Activated naive CD4-positive, alpha-beta T cell treated with anti-CD3 and anti-CD28 coated beads for 36 hours (primary cell): ENCODE measurements at regions of chr5 and their contacts with region 1.

Region 1: GRCh38 chr5:16666883-16667398 is 50.1 kb upstream of the RETREG1 start:
- DNase-seq: peak; percentile 53
- H3K4me3 Mint-ChIP-seq: no peak overlapping the region
- H3K27ac Mint-ChIP-seq: no peak overlapping the region
- H3K4me1 Mint-ChIP-seq: no peaks in the 10 kb centered on the region
- H3K27me3 Mint-ChIP-seq: no peaks in the 10 kb centered on the region

Region 2: DNA sequence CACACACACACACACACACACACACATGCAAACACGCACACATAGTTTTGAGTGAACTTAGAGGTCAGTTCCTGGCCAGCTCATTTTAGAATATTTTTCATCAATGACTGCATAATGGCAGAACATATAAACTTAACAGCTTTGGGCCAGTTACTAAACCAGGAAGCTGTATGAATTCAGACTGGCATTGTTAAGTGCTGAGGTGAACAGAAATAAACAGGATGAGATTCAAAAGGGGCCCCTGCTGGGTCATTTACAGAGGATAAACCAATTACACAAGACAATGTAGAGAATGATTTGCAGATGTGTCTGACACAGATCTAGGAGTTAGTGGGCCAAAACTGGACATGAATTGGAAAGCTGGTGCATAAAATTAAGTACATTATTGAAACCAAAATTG is 531.9 kb before region 1 on chr5:
- CTCF ChIA-PET with region 1: no interaction called
- intact Hi-C with region 1: no loop called
- DNase-seq: no peak
- H3K4me3 Mint-ChIP-seq: no peak overlapping the region
- H3K27ac Mint-ChIP-seq: no peak overlapping the region
- H3K4me1 Mint-ChIP-seq: no peaks in the 10 kb centered on the region
- H3K27me3 Mint-ChIP-seq: peaks cover 3% of the 10 kb centered on the region

Region 3: GRCh38 chr5:16160706-16161105 is 506.2 kb before region 1 on chr5:
- CTCF ChIA-PET with region 1: interaction called, 4 read pairs
- intact Hi-C with region 1: loop called (anchors 1 kb)
- DNase-seq: peak; percentile 45
- H3K4me3 Mint-ChIP-seq: no peak overlapping the region
- H3K27ac Mint-ChIP-seq: no peak overlapping the region
- H3K4me1 Mint-ChIP-seq: no peaks in the 10 kb centered on the region
- H3K27me3 Mint-ChIP-seq: peaks cover 2% of the 10 kb centered on the region

Region 4: GRCh38 chr5:16456103-16456832 is 210.7 kb before region 1 on chr5:
- CTCF ChIA-PET with region 1: interaction called, 11 read pairs
- intact Hi-C with region 1: no loop called
- DNase-seq: peak; percentile 61
- H3K4me3 Mint-ChIP-seq: peak overlapping the region; percentile 46
- H3K27ac Mint-ChIP-seq: peak overlapping the region; percentile 91
- H3K4me1 Mint-ChIP-seq: peaks cover 51% of the 10 kb centered on the region
- H3K27me3 Mint-ChIP-seq: no peaks in the 10 kb centered on the region

Region 5: DNA sequence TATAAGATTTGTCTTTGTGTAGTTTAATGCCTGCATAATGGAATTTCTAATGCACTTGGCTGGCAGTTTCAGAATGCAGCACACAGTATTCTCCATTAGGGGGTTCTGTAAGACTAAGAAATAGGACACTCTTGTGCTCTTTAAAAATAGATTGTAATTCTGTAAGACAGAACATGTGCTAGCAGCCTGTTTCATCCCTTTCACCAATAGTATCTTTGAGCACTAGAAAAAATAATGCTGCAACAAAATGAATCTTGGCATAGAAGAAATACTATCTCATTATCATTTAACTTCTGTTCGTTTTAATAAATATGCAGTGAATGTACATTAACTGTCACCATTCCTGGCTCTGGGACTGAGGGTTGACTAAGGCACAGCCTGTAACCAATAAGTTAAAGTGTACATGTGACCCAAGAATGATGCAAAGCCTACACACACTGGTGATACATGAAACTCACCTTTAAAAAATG is 177.6 kb before region 1 on chr5:
- CTCF ChIA-PET with region 1: interaction called, 6 read pairs
- intact Hi-C with region 1: loop called (anchors 1 kb)
- DNase-seq: no peak
- H3K4me3 Mint-ChIP-seq: no peak overlapping the region
- H3K27ac Mint-ChIP-seq: no peak overlapping the region
- H3K4me1 Mint-ChIP-seq: peaks cover 15% of the 10 kb centered on the region
- H3K27me3 Mint-ChIP-seq: no peaks in the 10 kb centered on the region